HCT116 (cell line): ENCODE measurements at regions of chr3 and their contacts with region 1.

Region 1: GRCh38 chr3:183385698-183386613 is 42.5 kb downstream of the MCF2L2 start:
- DNase-seq: peak; percentile 45
- ATAC-seq: peak; percentile 82
- H3K4me3 ChIP-seq: no peak overlapping the region
- H3K27ac ChIP-seq: no peak overlapping the region
- H3K4me1 ChIP-seq: no peaks in the 10 kb centered on the region
- H3K27me3 ChIP-seq: no peaks in the 10 kb centered on the region
- CTCF ChIP-seq: peak; percentile 62 to 84 (median 77); a peak in 5 of 6 replicates
- POLR2A ChIP-seq: no peak
- RAD21 ChIP-seq: peak; percentile 90

Region 2: GRCh38 chr3:182713743-182714517 is 672.0 kb before region 1 on chr3:
- CTCF ChIA-PET with region 1: interaction called, 8 read pairs
- POLR2A ChIA-PET with region 1: no interaction called
- RAD21 ChIA-PET with region 1: no interaction called
- intact Hi-C with region 1: loop called (anchors 2 kb)
- DNase-seq: peak; percentile 60
- ATAC-seq: peak; percentile 79
- H3K4me3 ChIP-seq: no peak overlapping the region
- H3K27ac ChIP-seq: no peak overlapping the region
- H3K4me1 ChIP-seq: no peaks in the 10 kb centered on the region
- H3K27me3 ChIP-seq: no peaks in the 10 kb centered on the region
- CTCF ChIP-seq: peak; percentile 57 to 66 (median 58); a peak in 5 of 6 replicates
- POLR2A ChIP-seq: no peak
- RAD21 ChIP-seq: peak; percentile 91

Region 3: GRCh38 chr3:183122257-183122932 is 263.6 kb before region 1 on chr3:
- CTCF ChIA-PET with region 1: interaction called, 22 read pairs
- POLR2A ChIA-PET with region 1: no interaction called
- RAD21 ChIA-PET with region 1: interaction called, 3 to 10 read pairs
- intact Hi-C with region 1: loop called (anchors 1 kb)
- DNase-seq: peak; percentile 38
- ATAC-seq: peak; percentile 67
- H3K4me3 ChIP-seq: no peak overlapping the region
- H3K27ac ChIP-seq: no peak overlapping the region
- H3K4me1 ChIP-seq: no peaks in the 10 kb centered on the region
- H3K27me3 ChIP-seq: peaks cover 1% of the 10 kb centered on the region; the same call in 1 of the 2 replicates
- CTCF ChIP-seq: peak; percentile 67 to 88 (median 87)
- POLR2A ChIP-seq: no peak
- RAD21 ChIP-seq: peak; percentile 93

Region 4: GRCh38 chr3:183188895-183189462 is 197.0 kb before region 1 on chr3:
- CTCF ChIA-PET with region 1: interaction called, 251 read pairs
- POLR2A ChIA-PET with region 1: interaction called, 5 read pairs
- RAD21 ChIA-PET with region 1: interaction called, 12 to 25 read pairs
- intact Hi-C with region 1: loop called (anchors 1 kb)
- DNase-seq: peak; percentile 23
- ATAC-seq: peak; percentile 92
- H3K4me3 ChIP-seq: no peak overlapping the region
- H3K27ac ChIP-seq: no peak overlapping the region
- H3K4me1 ChIP-seq: no peaks in the 10 kb centered on the region
- H3K27me3 ChIP-seq: no peaks in the 10 kb centered on the region
- CTCF ChIP-seq: peak; percentile 36 to 70 (median 59); a peak in 5 of 6 replicates
- POLR2A ChIP-seq: no peak
- RAD21 ChIP-seq: peak; percentile 43; the same call in 1 of the 2 replicates

Region 5: DNA sequence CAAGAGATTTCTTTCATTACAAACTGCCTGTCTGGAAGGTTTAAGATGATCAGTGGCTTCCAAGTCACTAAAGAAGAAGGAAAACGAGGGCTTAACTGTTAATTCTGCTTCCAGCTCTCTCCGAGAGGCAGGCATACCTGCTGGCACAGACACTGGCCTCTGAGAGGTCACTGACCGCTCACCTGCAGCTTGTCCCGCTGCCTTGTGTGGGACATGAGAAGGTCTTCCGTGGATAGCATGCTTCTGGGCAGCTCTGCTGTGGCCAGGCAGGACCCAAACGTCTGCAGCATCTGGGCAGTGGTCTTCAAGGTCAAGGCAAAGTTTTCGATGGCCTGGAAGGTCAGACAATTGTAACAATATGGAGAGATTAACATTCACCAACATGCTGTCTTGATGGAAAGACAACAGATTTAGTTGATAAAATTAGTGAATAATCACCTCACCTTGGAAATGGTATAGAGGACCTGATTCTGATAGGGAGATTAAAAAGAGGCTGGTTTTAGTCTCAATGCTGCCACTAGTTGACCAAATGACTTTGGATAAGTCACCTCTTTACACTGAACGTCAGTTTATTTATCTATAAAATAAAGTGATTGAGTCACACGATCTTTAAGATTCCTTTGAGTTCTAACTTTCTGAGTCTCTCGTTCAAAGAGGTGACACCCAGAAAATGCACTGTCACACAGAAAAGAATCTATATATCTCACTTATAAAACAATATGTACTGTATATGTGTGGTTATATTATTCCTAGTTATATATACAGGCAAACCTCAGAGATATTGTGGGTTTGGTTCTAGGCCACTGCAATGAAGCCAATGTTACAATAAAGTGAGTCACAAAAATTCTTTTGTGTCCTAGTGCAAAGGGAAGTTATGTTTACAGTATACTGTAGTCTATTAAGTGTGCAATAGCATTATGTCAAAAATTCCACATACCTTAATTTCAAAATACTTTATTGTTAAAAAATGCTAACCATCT is 67.8 kb before region 1 on chr3:
- CTCF ChIA-PET with region 1: no interaction called
- POLR2A ChIA-PET with region 1: no interaction called
- RAD21 ChIA-PET with region 1: no interaction called
- intact Hi-C with region 1: no loop called
- DNase-seq: no peak
- ATAC-seq: no peak
- H3K4me3 ChIP-seq: no peak overlapping the region
- H3K27ac ChIP-seq: no peak overlapping the region
- H3K4me1 ChIP-seq: peaks cover 0 to 6% of the 10 kb centered on the region in 2 experiments; a peak in 3 of 4 replicates
- H3K27me3 ChIP-seq: no peaks in the 10 kb centered on the region
- CTCF ChIP-seq: no peak
- POLR2A ChIP-seq: no peak
- RAD21 ChIP-seq: no peak

Region 6: DNA sequence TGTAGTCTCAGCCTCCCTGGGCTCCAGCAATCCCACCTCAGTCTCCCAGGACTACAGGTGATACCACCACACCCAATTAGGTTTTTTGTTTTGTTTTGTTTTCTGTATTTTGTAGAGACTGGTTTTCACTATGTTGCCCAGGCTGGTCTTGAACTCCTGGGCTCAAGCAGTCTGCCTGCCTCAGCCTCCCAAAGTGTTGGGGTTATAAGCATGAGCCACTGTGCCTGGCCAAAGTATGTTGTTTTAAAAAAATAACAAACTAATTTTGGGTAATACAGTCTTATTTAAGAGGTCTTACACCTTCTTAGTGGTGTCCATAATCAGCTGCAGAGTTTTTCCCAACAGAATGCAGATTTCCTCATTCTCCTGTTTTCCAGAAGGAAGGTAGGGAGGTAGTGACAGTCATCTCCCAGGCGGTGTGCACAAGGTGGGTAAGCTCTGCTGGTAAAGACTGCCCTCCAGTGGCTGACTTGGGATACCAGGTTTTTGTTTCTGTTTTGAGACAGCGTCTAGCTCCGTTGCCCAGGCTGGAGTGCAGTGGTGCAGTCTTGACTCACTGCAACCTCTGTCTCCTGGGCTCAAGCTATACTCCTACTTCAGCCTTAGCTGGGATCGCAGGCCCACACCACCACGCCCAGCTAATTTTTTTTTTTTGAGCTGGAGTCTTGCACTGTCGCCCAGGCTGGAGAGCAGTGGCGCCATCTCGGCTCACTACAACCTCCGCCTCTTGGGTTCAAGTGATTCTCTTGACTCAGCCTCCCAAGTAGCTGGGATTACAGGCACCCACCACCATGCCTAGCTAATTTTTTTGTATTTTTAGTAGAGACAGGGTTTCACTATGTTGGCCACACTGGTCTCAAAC is 381.0 kb after region 1 on chr3:
- CTCF ChIA-PET with region 1: interaction called, 3 read pairs
- POLR2A ChIA-PET with region 1: no interaction called
- RAD21 ChIA-PET with region 1: no interaction called
- intact Hi-C with region 1: loop called (anchors 1 kb)
- DNase-seq: peak; percentile 53
- ATAC-seq: peak; percentile 99
- H3K4me3 ChIP-seq: no peak overlapping the region
- H3K27ac ChIP-seq: no peak overlapping the region
- H3K4me1 ChIP-seq: no peaks in the 10 kb centered on the region
- H3K27me3 ChIP-seq: no peaks in the 10 kb centered on the region
- CTCF ChIP-seq: peak; percentile 70 to 81 (median 80)
- POLR2A ChIP-seq: no peak
- RAD21 ChIP-seq: peak; percentile 89

Region 7: GRCh38 chr3:184135149-184135910 is 749.4 kb after region 1 on chr3 and contains the start of gene EIF2B5:
- CTCF ChIA-PET with region 1: no interaction called
- POLR2A ChIA-PET with region 1: no interaction called
- RAD21 ChIA-PET with region 1: no interaction called
- intact Hi-C with region 1: no loop called
- DNase-seq: peak; percentile 89
- ATAC-seq: peak; percentile 79
- H3K4me3 ChIP-seq: peak within 1 kb of the TSS; percentile 89 to 91
- H3K27ac ChIP-seq: peak within 1 kb of the TSS; percentile 71
- H3K4me1 ChIP-seq: peaks cover 9 to 31% of the 10 kb centered on the region in 2 experiments; a peak in 3 of 4 replicates
- H3K27me3 ChIP-seq: no peaks in the 10 kb centered on the region
- CTCF ChIP-seq: peak in 1 of 3 experiments; percentile 41; a peak in 1 of 6 replicates
- POLR2A ChIP-seq: peak; percentile 69
- RAD21 ChIP-seq: no peak
- total RNA-seq, gene EIF2B5: 50.3 TPM